Prostate gland (tissue), 2 donors: ENCODE measurements at regions of chr22 and their contacts with region 1.

Region 1: DNA sequence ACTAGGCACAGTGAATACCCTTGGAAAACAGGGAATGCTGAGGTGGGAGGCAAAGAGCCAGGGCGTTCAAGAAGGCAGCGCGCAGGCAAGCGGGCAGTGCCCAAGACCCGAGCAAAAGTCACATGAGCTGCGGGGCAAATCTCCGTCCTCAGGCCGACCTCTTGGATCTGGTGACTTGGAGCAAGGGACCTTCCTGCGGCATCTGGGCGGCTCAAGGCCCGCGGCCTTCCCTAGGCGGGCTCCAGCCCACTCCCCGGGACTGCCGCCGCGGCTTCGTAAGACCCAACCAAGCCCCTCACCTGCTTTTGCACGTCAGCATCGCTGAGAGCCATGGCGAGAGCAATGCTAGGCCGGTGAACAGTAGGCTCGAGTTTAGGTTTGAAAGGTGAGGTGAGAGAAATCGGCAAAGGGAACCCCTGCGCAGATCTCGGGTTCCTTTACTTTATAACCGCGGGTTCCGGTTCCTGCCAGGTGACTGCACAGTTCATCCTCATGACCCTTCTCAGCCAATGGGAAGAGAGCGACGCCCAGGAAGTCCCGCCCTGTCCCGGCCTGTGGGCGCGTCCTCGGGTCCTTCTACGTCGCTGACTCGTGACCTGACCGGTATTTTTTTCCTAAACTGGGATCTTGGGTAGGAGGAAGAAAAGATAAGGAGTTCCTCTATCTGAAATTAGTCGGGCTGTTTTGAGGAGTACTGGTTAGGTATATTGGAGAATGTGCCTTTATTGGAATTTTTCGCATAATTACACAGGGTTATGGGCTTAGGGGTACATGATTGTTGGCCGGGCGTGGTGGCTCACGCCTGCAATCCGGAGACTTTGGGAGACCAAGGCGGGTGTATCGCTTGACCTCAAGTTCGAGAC is at the start of gene ATP6V1E1:
- DNase-seq: peak; percentile 97
- H3K4me3 ChIP-seq: peak within 1 kb of the TSS; percentile 89 to 91
- H3K27ac ChIP-seq: peak within 1 kb of the TSS; percentile 90 to 92
- H3K4me1 ChIP-seq: no peaks in the 10 kb centered on the region
- H3K27me3 ChIP-seq: no peaks in the 10 kb centered on the region
- CTCF ChIP-seq: no peak
- POLR2A ChIP-seq: peak; percentile 61
- total RNA-seq, gene ATP6V1E1: 101 to 150 TPM

Region 2: GRCh38 chr22:17164392-17165024 is 464.0 kb before region 1 on chr22:
- intact Hi-C with region 1: loop called (anchors 10 kb)
- DNase-seq: no peak
- H3K4me3 ChIP-seq: no peak overlapping the region
- H3K27ac ChIP-seq: no peak overlapping the region
- H3K4me1 ChIP-seq: no peaks in the 10 kb centered on the region
- H3K27me3 ChIP-seq: no peaks in the 10 kb centered on the region
- CTCF ChIP-seq: no peak
- POLR2A ChIP-seq: no peak

Region 3: DNA sequence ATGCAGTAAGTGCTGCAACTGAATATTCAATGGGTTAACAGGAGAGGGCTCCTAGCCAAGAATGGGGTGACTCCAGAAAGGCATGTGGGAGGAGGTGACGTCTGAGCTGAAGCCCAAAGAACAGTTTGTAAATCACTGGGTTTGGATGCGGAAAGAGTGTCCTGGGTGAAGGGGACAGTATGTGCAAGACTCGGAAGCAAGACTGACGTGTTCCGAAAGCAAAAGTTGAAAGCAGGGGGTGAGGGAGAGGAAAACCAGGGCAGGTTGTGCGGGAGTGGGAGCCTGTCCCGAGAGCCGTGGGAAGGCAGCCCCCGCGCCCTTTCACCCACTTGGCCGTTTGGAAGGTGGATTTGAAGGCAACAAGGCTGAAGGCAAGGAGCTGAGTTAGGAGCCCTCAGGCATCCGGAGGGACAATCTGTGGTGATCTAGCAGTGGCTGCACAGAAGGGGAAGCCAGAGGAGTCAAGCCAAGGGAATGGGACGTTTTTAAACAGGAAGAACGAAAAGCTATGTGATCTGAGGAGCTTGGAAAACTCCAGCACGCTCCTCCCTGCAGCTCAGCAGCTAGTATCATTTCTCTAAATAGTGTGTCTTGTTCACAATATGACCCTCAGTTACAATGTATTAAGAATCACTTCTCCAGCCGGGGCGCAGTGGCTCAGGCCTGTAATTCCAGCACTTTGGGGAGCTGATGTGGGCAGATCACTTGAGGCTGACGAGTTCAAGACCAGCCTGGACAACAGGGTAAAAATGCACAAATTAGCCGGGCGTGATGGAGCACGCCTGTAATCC is 57.5 kb before region 1 on chr22:
- intact Hi-C with region 1: loop called (anchors 10 kb)
- DNase-seq: peak; percentile 63
- H3K4me3 ChIP-seq: peak overlapping the region; percentile 16 to 34
- H3K27ac ChIP-seq: peak overlapping the region; percentile 79 to 86
- H3K4me1 ChIP-seq: no peaks in the 10 kb centered on the region
- H3K27me3 ChIP-seq: no peaks in the 10 kb centered on the region
- CTCF ChIP-seq: no peak
- POLR2A ChIP-seq: no peak

Region 4: GRCh38 chr22:17638432-17639246 is 10.1 kb after region 1 on chr22 and contains the start of gene BCL2L13:
- intact Hi-C with region 1: loop called (anchors 1 kb)
- DNase-seq: peak; percentile 91
- H3K4me3 ChIP-seq: peak within 1 kb of the TSS; percentile 68 to 89
- H3K27ac ChIP-seq: peak within 1 kb of the TSS; percentile 98 to 99
- H3K4me1 ChIP-seq: peaks cover 7% of the 10 kb centered on the region
- H3K27me3 ChIP-seq: no peaks in the 10 kb centered on the region
- CTCF ChIP-seq: peak in 2 of 4 experiments; percentile 35 to 53
- POLR2A ChIP-seq: peak; percentile 98
- total RNA-seq, gene BCL2L13: 64.7 to 67.9 TPM

Region 5: DNA sequence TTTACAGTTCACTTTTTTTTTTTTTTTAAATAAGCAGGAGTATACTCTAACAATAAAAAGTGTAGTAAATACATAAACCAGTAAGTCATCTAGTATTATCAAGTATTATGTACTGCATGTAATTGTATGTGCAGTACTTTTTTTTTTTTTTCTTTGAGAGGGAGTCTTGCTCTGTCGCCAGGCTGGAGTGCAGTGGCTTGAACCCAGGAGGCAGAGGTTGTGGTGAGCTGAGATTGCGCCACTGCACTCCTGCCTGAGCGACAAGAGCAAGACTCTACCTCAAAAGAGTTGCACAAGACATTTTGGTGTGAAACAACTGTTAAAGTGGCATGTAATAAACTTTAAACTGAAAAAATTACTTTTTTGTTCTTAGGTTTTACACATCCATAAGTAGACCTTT is 26.8 kb after region 1 on chr22:
- intact Hi-C with region 1: no loop called
- DNase-seq: no peak
- H3K4me3 ChIP-seq: no peak overlapping the region
- H3K27ac ChIP-seq: no peak overlapping the region
- H3K4me1 ChIP-seq: peaks cover 2% of the 10 kb centered on the region
- H3K27me3 ChIP-seq: no peaks in the 10 kb centered on the region
- CTCF ChIP-seq: no peak
- POLR2A ChIP-seq: no peak

Region 6: DNA sequence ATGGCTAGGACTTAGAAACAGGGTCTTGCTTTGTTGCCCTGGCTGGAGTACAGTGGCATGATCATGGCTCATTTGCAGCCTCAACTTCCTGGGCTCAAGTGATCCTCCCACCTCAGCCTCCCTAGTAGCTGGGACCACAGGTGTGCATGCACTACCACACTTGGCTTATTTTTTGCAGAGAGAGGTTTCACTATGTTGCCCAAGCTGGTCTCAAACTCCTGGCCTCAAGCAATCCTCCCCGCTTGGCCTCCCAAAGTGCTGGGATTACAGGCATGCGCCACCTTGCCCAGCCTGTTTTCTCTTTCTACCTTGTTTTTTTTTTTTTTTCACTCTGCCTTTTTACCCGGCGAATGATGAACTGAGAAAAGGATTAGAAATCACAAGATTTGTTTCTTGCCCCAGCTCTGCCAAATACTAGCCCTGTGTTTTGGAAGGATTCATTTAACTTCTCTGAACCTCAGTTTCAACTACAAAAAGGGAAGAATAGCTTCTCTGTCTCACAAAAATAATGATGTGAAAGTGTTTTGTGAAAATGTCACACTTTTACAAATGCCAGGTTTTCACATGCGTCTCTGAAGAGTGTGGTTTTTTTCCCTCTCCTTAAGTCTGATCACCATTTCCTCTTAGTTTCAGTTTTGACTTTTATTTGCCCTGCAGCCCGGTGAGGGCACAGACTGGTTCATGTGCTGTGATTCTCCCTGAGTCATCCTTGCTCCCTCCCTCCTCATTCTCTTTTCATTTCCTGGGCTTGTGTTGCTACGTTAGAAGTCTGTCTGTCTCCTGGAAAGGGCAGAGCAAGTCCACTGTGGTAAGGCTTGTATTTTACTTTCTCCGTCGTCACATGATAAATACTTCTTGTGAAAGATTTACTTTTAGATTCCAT is 77.7 kb after region 1 on chr22:
- intact Hi-C with region 1: no loop called
- DNase-seq: peak; percentile 68
- H3K4me3 ChIP-seq: peak overlapping the region; percentile 11 to 23
- H3K27ac ChIP-seq: peak overlapping the region; percentile 72 to 79
- H3K4me1 ChIP-seq: no peaks in the 10 kb centered on the region
- H3K27me3 ChIP-seq: no peaks in the 10 kb centered on the region
- CTCF ChIP-seq: no peak
- POLR2A ChIP-seq: peak; percentile 29